Activated CD4-positive, alpha-beta T cell treated with anti-CD3 and anti-CD28 coated beads, Interleukin-2, amount 10 ng/mL, durations not matched to agents 24 days and 14 days (primary cell): ENCODE measurements at regions of chr11 and their contacts with region 1.

Region 1: DNA sequence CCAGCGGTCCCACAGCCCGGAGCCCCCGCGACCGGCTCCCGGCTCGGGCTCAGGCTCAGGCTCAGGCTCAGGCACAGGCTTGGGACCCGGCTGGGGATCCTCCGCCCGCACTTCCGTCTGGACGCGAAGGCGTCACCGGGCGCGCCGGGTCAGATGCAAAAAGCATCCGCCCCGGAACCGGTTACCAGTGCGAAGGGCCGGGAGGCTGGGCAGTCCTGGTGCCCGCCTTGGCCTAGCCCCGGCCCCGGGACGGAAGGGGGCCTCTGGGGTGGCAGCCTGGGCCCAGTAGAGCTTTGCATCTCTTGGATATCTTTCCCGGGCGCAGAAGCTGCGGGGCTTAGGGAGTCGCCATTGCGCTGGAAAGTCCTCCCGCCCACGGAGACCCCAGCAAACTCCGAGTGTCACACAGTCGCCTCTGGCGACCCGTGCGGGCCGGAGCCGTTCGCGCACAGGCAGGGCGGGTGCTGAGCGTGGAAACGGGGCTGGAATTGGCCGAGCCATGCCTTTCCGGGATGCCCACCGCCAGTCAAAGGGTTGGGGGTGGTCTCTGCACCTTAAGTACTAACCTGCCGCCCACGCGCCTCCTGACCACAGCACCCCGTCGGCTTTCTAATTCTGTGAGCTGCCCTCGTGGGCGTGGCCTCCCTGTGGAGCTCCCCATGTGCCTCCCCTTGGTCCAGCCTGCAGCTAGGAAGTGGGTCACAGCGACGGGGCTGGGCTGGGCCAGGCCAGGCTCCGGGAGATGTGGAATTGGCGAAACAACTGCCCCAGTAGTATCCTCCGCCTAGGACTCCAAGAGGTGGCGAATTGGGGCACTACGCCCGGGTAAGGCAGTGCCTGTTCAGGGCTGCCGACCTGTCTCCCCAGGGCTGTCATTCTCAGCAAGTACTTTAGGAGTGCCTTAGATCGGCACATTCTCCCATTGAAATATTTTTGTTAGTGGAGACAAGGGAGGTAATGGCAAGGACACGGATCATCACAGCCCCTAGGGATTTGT is at the start of gene TMEM9B:
- DNase-seq: peak; percentile 95
- H3K4me3 Mint-ChIP-seq: peak within 1 kb of the TSS; percentile 100
- H3K27ac Mint-ChIP-seq: peak within 1 kb of the TSS; percentile 95
- H3K4me1 Mint-ChIP-seq: peaks cover 30% of the 10 kb centered on the region
- H3K27me3 Mint-ChIP-seq: no peaks in the 10 kb centered on the region
- total RNA-seq, gene TMEM9B: 25.2 and 26.5 TPM in 2 replicates

Region 2: GRCh38 chr11:7986768-7987559 is 977.7 kb before region 1 on chr11 and contains the start of gene EIF3F:
- intact Hi-C with region 1: loop called (anchors 5 kb)
- DNase-seq: peak; percentile 97
- H3K4me3 Mint-ChIP-seq: peak within 1 kb of the TSS; percentile 95
- H3K27ac Mint-ChIP-seq: peak within 1 kb of the TSS; percentile 95
- H3K4me1 Mint-ChIP-seq: peaks cover 23% of the 10 kb centered on the region
- H3K27me3 Mint-ChIP-seq: no peaks in the 10 kb centered on the region
- total RNA-seq, gene EIF3F: 224 and 226 TPM in 2 replicates

Region 3: GRCh38 chr11:8688414-8689362 is 275.9 kb before region 1 on chr11:
- intact Hi-C with region 1: loop called (anchors 1 kb)
- DNase-seq: peak; percentile 96
- H3K4me3 Mint-ChIP-seq: peak overlapping the region; percentile 94
- H3K27ac Mint-ChIP-seq: peak overlapping the region; percentile 88
- H3K4me1 Mint-ChIP-seq: peaks cover 43% of the 10 kb centered on the region
- H3K27me3 Mint-ChIP-seq: no peaks in the 10 kb centered on the region

Region 4: DNA sequence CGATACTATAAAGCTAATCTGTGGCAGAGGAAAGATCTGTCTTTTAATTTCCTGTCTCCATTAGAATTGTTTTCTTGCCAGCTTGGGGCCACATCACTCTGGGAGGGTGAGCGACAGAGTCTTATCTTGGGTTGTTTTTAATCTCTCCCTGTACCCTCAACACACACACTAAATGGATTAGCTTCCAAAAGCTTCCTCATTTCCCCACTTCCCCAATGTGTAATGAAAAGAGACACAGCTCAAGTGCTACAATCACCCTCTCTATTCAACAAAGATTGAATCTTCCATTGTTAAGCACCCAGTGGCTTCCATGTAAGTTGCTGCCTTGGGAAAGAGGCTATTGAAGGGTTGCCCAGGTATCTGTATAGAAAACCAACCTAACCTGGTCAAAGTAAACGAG is 15.7 kb before region 1 on chr11:
- intact Hi-C with region 1: no loop called
- DNase-seq: no peak
- H3K4me3 Mint-ChIP-seq: no peak overlapping the region
- H3K27ac Mint-ChIP-seq: no peak overlapping the region
- H3K4me1 Mint-ChIP-seq: no peaks in the 10 kb centered on the region
- H3K27me3 Mint-ChIP-seq: peaks cover 2% of the 10 kb centered on the region

Region 5: GRCh38 chr11:9003573-9004309 is 39.1 kb after region 1 on chr11 and contains the start of gene NRIP3:
- intact Hi-C with region 1: loop called (anchors 1 kb)
- DNase-seq: peak; percentile 94
- H3K4me3 Mint-ChIP-seq: peak within 1 kb of the TSS; percentile 86
- H3K27ac Mint-ChIP-seq: peak within 1 kb of the TSS; percentile 77
- H3K4me1 Mint-ChIP-seq: peaks cover 26% of the 10 kb centered on the region
- H3K27me3 Mint-ChIP-seq: peaks cover 45% of the 10 kb centered on the region
- total RNA-seq, gene NRIP3: 4.8 and 5.3 TPM in 2 replicates

Region 6: GRCh38 chr11:9384535-9385303 is 420.1 kb after region 1 on chr11 and contains the start of gene IPO7:
- intact Hi-C with region 1: loop called (anchors 1 kb)
- DNase-seq: peak; percentile 97
- H3K4me3 Mint-ChIP-seq: peak within 1 kb of the TSS; percentile 95
- H3K27ac Mint-ChIP-seq: peak within 1 kb of the TSS; percentile 94
- H3K4me1 Mint-ChIP-seq: peaks cover 21% of the 10 kb centered on the region
- H3K27me3 Mint-ChIP-seq: no peaks in the 10 kb centered on the region
- total RNA-seq, gene IPO7: 177 and 200 TPM in 2 replicates

Region 7: GRCh38 chr11:9972989-9973388 is 1008.4 kb after region 1 on chr11:
- intact Hi-C with region 1: no loop called
- DNase-seq: peak; percentile 80
- H3K4me3 Mint-ChIP-seq: no peak overlapping the region
- H3K27ac Mint-ChIP-seq: no peak overlapping the region
- H3K4me1 Mint-ChIP-seq: peaks cover 4% of the 10 kb centered on the region
- H3K27me3 Mint-ChIP-seq: no peaks in the 10 kb centered on the region